Left cardiac atrium (tissue), 4 donors: ENCODE measurements at regions of chr6 and their contacts with region 1.

Region 1: GRCh38 chr6:34757687-34758274 is 476 bp downstream of the SNRPC start:
- DNase-seq: no peak
- ATAC-seq: peak in 1 of 2 donors; percentile 1

Region 2: GRCh38 chr6:34696739-34697543 is 60.8 kb before region 1 on chr6 and contains the start of gene ILRUN:
- intact Hi-C with region 1: loop called in 1 of 2 experiments (anchors 2 kb)
- DNase-seq: peak; percentile 97
- ATAC-seq: peak; percentile 96
- total RNA-seq, gene ILRUN: 102 to 104 TPM